ENCODE measurements at regions of chr10 and their contacts with region 1.

Region 1: DNA sequence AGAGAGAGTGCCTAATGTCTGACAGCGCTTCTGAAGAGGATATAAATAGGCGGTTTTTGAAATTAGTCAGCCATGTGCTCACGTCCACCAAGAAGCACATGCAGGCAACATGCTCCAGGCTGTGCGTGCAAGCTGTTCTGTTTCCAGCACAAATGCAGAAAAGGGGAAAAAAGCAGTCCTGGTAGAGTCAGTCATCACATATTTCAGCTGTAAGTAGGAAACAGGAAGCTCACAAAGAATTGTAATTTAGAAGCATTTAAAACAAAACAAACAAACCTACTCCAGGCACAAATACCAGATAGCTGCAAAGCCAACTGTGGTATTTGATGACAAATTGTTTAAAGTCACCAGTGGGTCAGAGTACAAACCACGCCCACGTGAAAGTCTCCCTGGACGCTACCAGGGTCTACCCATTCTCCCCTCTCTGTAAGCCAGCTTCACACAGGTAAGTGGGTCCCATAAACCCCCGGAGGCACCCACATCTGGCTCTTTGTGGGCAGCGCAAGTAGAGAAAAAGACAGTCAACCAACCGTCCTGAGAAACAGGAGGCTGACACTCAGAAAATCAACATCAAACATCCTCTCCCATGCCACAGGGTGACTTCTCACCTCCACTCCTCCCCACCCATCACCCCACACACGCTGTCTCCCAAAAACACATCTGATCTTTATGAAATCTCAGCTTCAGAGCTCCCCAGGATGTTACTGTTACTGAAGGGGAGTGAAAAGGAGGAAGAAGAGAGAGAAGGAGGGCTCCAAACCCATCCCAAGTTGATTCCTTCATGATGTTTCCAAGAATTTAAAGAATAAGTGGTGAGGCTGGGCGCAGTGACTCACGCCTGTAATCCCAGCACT is 186.4 kb downstream of the FAM107B start:
- DNase-seq: peak; percentile 83
- H3K4me3 Mint-ChIP-seq: peak overlapping the region; percentile 63
- H3K27ac Mint-ChIP-seq: peak overlapping the region; percentile 97
- H3K4me1 Mint-ChIP-seq: peaks cover 90% of the 10 kb centered on the region
- H3K27me3 Mint-ChIP-seq: no peaks in the 10 kb centered on the region

Region 2: DNA sequence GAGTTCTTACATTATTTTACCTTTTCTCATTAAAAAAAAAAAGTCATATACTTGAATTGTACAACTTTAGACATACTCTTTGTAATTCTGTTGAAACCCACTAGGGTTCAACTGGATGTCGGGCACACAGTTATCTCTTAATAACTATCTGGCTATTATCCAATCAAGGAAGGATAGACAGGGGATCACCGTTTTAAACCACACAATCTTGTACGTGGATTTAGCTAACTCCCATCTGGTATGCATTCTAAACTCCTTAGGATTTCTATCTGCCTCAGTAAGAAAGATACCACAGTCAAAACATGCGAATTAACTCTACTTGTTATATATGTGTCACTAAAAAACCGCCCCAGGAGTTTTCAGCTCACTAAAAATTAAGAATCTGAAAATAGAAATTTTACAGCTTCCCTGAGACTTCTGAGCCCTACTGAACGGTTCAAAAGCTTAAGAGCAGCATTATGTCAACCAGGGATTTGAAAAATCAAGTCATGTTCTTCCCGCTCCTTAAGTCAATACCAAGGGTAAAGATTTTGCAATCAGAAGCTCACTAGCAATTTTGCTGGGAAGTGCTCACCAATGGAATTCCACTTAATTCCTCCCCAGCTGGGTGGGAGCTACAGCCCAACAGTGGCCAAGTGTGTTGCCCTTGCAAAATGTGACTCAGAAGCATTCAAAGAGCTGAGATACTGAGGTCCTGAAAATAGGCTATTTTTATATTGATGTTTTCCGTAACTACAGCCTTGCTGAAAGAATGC is 524.6 kb before region 1 on chr10:
- CTCF ChIA-PET with region 1: no interaction called
- intact Hi-C with region 1: no loop called
- DNase-seq: no peak
- H3K4me3 Mint-ChIP-seq: no peak overlapping the region
- H3K27ac Mint-ChIP-seq: no peak overlapping the region
- H3K4me1 Mint-ChIP-seq: no peaks in the 10 kb centered on the region
- H3K27me3 Mint-ChIP-seq: no peaks in the 10 kb centered on the region

Region 3: DNA sequence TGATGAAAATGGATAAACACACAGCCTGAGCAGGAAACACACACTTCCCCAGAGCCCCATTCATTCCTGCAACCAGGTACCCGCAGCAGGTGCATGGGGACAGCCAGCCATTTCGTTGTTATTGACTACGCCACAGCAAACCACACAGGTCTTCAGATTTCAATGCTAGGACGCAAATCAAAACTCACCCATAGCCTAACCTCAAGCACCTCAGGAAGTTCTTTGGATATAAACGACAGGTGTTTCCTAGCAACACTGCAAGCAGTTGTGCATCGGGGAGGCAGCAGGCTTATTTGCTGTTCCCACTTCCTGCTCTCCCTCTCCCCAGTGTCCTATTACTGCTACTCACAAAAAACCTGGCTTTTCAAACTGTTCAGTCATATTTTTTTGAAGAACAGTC is 81.1 kb before region 1 on chr10:
- CTCF ChIA-PET with region 1: no interaction called
- intact Hi-C with region 1: loop called (anchors 1 kb)
- DNase-seq: peak; percentile 76
- H3K4me3 Mint-ChIP-seq: no peak overlapping the region
- H3K27ac Mint-ChIP-seq: peak overlapping the region; percentile 59
- H3K4me1 Mint-ChIP-seq: peaks cover 42% of the 10 kb centered on the region
- H3K27me3 Mint-ChIP-seq: no peaks in the 10 kb centered on the region

Region 4: DNA sequence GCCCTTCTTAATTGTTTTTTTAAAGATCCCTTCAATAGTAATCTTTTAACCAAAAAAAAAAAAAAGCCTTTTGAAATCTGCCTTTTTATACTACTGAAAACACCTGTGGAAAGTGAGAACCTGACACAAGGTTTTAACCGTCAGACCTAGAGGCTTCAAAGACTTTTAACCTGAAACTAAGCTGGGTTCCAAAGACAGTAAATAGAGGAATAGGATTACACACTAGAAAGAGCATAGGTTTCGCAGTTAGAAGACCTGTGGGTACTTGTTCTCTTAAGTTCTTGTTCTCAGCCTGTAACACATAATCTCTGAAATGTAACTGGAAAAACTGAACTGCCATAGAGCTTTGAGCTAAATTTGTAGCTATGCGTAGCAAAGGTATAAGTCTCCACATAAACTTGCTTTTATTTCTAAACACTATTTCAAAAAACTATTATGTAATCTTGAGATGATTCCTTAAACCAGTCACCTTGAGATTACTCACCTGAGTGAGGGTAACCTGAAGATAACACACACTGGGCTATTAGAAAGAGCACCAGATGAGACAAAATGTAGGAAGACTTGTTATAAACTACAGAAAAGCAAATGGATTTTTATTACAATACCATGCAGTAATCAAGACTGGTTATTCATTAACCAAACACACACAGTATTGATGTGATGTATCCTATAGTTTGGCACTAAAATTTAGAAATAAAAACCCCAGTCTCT is 61.0 kb before region 1 on chr10:
- CTCF ChIA-PET with region 1: interaction called, 4 read pairs
- intact Hi-C with region 1: loop called (anchors 2 kb)
- DNase-seq: no peak
- H3K4me3 Mint-ChIP-seq: no peak overlapping the region
- H3K27ac Mint-ChIP-seq: peak overlapping the region; percentile 81
- H3K4me1 Mint-ChIP-seq: peaks cover 78% of the 10 kb centered on the region
- H3K27me3 Mint-ChIP-seq: no peaks in the 10 kb centered on the region

Region 5: DNA sequence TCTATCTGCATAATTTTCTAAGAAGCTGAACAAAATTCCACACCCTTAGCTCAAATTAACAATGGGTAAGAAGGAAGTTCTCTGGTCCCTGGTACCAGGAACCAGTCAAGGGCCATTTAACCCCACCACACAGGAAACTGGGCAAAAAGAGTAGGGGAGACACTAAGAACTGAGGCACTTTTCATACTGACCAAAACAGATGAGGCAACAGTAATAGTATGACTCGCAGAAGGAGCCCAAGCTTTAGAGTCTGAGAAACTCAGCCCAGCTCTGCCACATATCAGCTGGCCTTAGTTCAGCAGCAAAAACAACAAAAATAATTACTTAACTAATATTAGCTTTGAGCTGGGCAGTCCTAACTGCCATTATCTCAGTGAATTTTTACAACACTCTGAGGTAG is 34.9 kb before region 1 on chr10:
- CTCF ChIA-PET with region 1: interaction called, 5 read pairs
- intact Hi-C with region 1: loop called (anchors 5 kb)
- DNase-seq: no peak
- H3K4me3 Mint-ChIP-seq: no peak overlapping the region
- H3K27ac Mint-ChIP-seq: peak overlapping the region; percentile 43
- H3K4me1 Mint-ChIP-seq: peaks cover 89% of the 10 kb centered on the region
- H3K27me3 Mint-ChIP-seq: no peaks in the 10 kb centered on the region

Region 6: DNA sequence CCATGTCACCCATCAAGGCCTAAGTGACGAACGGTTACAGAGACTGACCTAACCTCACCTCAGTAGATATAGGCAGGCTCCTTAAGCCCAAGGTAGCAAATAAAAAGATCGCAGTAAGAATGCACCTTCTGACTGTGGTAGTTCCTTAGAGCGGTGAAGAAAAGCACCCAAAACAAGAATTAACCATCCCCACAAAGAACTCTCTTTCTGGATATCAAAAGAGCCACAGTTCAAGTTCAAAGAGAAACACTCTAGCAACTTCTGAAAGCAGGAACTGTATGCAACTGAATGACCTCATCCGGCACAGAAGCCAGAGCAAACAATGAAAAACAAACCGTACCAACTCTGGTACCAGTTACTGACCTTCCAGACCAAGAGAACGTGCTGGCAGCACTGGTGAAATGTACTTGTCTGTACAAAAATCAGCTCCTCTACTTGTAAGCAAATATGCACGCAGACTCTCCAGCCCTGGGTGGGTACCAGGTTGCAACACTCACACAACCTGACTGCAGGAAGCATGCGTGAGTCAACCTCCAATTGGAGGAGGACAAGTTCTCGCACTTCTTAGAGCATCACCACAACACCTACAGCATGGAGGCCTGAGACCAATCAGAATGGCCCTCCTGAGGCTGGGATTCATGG is 16.3 kb before region 1 on chr10:
- CTCF ChIA-PET with region 1: interaction called, 4 read pairs
- intact Hi-C with region 1: loop called (anchors 1 kb)
- DNase-seq: peak; percentile 78
- H3K4me3 Mint-ChIP-seq: peak overlapping the region; percentile 69
- H3K27ac Mint-ChIP-seq: peak overlapping the region; percentile 97
- H3K4me1 Mint-ChIP-seq: peaks cover 81% of the 10 kb centered on the region
- H3K27me3 Mint-ChIP-seq: no peaks in the 10 kb centered on the region

Region 7: GRCh38 chr10:14837757-14838581 is 249.7 kb after region 1 on chr10 and contains the starts of genes CDNF, HSPA14 and MSANTD7:
- CTCF ChIA-PET with region 1: interaction called, 3 read pairs
- intact Hi-C with region 1: loop called (anchors 1 kb)
- DNase-seq: peak; percentile 99
- H3K4me3 Mint-ChIP-seq: peak within 1 kb of the TSS; percentile 92
- H3K27ac Mint-ChIP-seq: peak within 1 kb of the TSS; percentile 93
- H3K4me1 Mint-ChIP-seq: peaks cover 22% of the 10 kb centered on the region
- H3K27me3 Mint-ChIP-seq: no peaks in the 10 kb centered on the region
- total RNA-seq, gene CDNF: 1.6 to 1.8 TPM
- total RNA-seq, gene HSPA14: 28.1 to 29.9 TPM
- total RNA-seq, gene MSANTD7: 19.6 to 21.3 TPM

Region 8: GRCh38 chr10:14959276-14960057 is 371.2 kb after region 1 on chr10 and contains the start of gene MEIG1:
- CTCF ChIA-PET with region 1: no interaction called
- intact Hi-C with region 1: loop called (anchors 1 kb)
- DNase-seq: peak; percentile 91
- H3K4me3 Mint-ChIP-seq: peak within 1 kb of the TSS; percentile 98
- H3K27ac Mint-ChIP-seq: peak within 1 kb of the TSS; percentile 98
- H3K4me1 Mint-ChIP-seq: peaks cover 27% of the 10 kb centered on the region
- H3K27me3 Mint-ChIP-seq: no peaks in the 10 kb centered on the region
- total RNA-seq, gene MEIG1: 0.81 to 0.93 TPM